Calu3 (cell line): ENCODE measurements at regions of chr10 and their contacts with region 1.

Region 1: GRCh38 chr10:103888113-103888841 is 29.7 kb downstream of the STN1 start:
- DNase-seq: peak; percentile 82
- H3K4me3 Mint-ChIP-seq: peak overlapping the region; percentile 12
- H3K27ac Mint-ChIP-seq: peak overlapping the region; percentile 85
- H3K4me1 Mint-ChIP-seq: peaks cover 27% of the 10 kb centered on the region
- H3K27me3 Mint-ChIP-seq: no peaks in the 10 kb centered on the region
- CTCF ChIP-seq: no peak

Region 2: GRCh38 chr10:103316087-103316486 is 572.2 kb before region 1 on chr10:
- CTCF ChIA-PET with region 1: no interaction called
- intact Hi-C with region 1: no loop called
- DNase-seq: no peak
- H3K4me3 Mint-ChIP-seq: no peak overlapping the region
- H3K27ac Mint-ChIP-seq: no peak overlapping the region
- H3K4me1 Mint-ChIP-seq: no peaks in the 10 kb centered on the region
- H3K27me3 Mint-ChIP-seq: no peaks in the 10 kb centered on the region
- CTCF ChIP-seq: no peak

Region 3: GRCh38 chr10:103911021-103911459 is 22.8 kb after region 1 on chr10:
- CTCF ChIA-PET with region 1: interaction called, 4 read pairs
- intact Hi-C with region 1: loop called (anchors 2 kb)
- DNase-seq: no peak
- H3K4me3 Mint-ChIP-seq: peak overlapping the region; percentile 38
- H3K27ac Mint-ChIP-seq: peak overlapping the region; percentile 67
- H3K4me1 Mint-ChIP-seq: peaks cover 35% of the 10 kb centered on the region
- H3K27me3 Mint-ChIP-seq: no peaks in the 10 kb centered on the region
- CTCF ChIP-seq: no peak

Region 4: GRCh38 chr10:103986360-103986759 is 98.1 kb after region 1 on chr10:
- CTCF ChIA-PET with region 1: interaction called, 11 read pairs
- intact Hi-C with region 1: no loop called
- DNase-seq: no peak
- H3K4me3 Mint-ChIP-seq: no peak overlapping the region
- H3K27ac Mint-ChIP-seq: no peak overlapping the region
- H3K4me1 Mint-ChIP-seq: peaks cover 23% of the 10 kb centered on the region
- H3K27me3 Mint-ChIP-seq: no peaks in the 10 kb centered on the region
- CTCF ChIP-seq: no peak

Region 5: DNA sequence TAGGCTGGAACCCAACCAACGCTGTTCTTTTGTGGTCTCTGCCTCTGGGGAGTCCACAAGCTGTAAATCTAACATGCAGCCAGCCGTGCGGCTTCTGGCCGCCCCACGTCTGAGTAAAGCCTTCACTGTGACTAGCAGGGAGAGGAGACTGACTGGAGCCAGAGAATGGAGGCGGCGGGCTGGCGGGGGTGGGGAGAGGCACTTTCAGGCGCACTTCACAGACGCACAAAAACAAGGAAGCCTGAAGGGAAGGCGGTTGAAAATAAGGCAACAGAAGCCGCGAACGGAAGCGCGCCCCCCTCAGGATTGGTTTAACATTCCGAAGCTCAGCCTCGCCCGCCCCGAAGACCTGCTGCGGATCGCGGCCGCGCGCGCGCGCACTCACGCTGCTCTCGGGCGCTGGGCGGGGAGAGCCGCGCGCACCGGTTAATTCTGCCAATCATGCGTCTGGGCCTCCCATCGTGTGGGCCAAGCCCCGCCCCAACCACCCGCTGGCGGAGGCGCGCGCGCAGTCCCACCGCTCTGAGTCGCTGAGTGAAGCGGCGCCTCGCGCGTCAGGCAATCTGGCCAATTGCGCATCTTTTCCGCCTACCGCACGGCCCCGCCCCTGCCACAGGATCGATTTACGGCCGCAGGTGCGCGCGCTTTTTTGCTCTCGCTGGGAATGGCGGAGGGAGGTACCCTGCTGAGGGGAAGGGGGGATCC is 233.4 kb after region 1 on chr10 and contains the start of gene SFR1:
- CTCF ChIA-PET with region 1: interaction called, 6 read pairs
- intact Hi-C with region 1: loop called (anchors 2 kb)
- DNase-seq: peak; percentile 96
- H3K4me3 Mint-ChIP-seq: peak within 1 kb of the TSS; percentile 70
- H3K27ac Mint-ChIP-seq: peak within 1 kb of the TSS; percentile 94
- H3K4me1 Mint-ChIP-seq: peaks cover 26% of the 10 kb centered on the region
- H3K27me3 Mint-ChIP-seq: no peaks in the 10 kb centered on the region
- CTCF ChIP-seq: peak; percentile 38
- total RNA-seq, gene SFR1: 10.2 and 11.6 TPM in 2 replicates